ENCODE measurements at regions of chr7 and their contacts with region 1.

Region 1: GRCh38 chr7:28435732-28436378 is 23.5 kb downstream of the CREB5 start:
- DNase-seq: peak; percentile 46
- ATAC-seq: peak; percentile 94
- H3K4me3 ChIP-seq: no peak overlapping the region
- H3K27ac ChIP-seq: no peak overlapping the region
- H3K4me1 ChIP-seq: peaks cover 18% of the 10 kb centered on the region
- H3K27me3 ChIP-seq: peaks cover 33% of the 10 kb centered on the region
- CTCF ChIP-seq: no peak

Region 2: DNA sequence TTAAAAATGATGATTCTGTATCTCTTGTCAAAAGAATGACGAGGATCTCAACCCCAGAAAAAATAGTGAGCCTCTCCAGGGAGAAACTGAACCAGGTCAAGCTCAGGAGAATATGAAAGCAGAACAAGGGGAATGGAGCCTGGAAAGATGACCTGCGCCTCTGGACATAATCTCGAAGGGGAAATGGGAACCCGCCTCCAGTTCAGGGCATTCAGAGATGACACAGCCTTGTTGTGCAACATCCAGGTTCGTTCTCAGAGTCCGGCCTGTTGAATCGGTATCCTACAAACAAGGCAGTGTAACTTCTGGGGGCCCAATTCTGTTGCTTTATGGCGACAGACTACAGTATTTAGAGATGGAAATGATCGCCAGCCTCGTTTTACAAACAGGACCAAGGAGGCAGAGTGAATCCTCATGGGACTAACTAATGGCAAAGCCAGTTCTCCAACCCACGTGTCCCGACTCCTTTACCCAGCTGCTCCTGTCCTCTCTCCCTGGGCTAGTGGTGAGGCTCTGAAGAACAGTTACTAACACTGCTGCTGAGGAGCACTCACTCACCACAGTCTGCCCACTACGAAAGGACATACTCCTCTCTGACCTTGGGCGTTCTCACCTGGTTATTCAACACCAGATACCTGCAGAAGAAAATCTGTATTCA is 322.8 kb before region 1 on chr7:
- CTCF ChIA-PET with region 1: no interaction called
- POLR2A ChIA-PET with region 1: no interaction called
- intact Hi-C with region 1: no loop called
- DNase-seq: no peak
- ATAC-seq: no peak
- H3K4me3 ChIP-seq: no peak overlapping the region
- H3K27ac ChIP-seq: no peak overlapping the region
- H3K4me1 ChIP-seq: peaks cover 6% of the 10 kb centered on the region
- H3K27me3 ChIP-seq: no peaks in the 10 kb centered on the region
- CTCF ChIP-seq: no peak

Region 3: GRCh38 chr7:28132959-28133870 is 302.6 kb before region 1 on chr7:
- CTCF ChIA-PET with region 1: no interaction called
- POLR2A ChIA-PET with region 1: no interaction called
- intact Hi-C with region 1: no loop called
- DNase-seq: no peak
- ATAC-seq: peak; percentile 88
- H3K4me3 ChIP-seq: no peak overlapping the region
- H3K27ac ChIP-seq: no peak overlapping the region
- H3K4me1 ChIP-seq: 0 out of 2 replicates have a peak, but pooled peaks cover 6% of the 10 kb centered on the region
- H3K27me3 ChIP-seq: no peaks in the 10 kb centered on the region
- CTCF ChIP-seq: no peak

Region 4: GRCh38 chr7:28311670-28312069 is 124.2 kb before region 1 on chr7:
- CTCF ChIA-PET with region 1: no interaction called
- POLR2A ChIA-PET with region 1: no interaction called
- intact Hi-C with region 1: no loop called
- DNase-seq: no peak
- ATAC-seq: no peak
- H3K4me3 ChIP-seq: no peak overlapping the region
- H3K27ac ChIP-seq: no peak overlapping the region
- H3K4me1 ChIP-seq: peaks cover 25% of the 10 kb centered on the region
- H3K27me3 ChIP-seq: no peaks in the 10 kb centered on the region
- CTCF ChIP-seq: no peak

Region 5: GRCh38 chr7:28466341-28466740 is 30.5 kb after region 1 on chr7:
- CTCF ChIA-PET with region 1: no interaction called
- POLR2A ChIA-PET with region 1: no interaction called
- intact Hi-C with region 1: loop called (anchors 2 kb)
- DNase-seq: peak; percentile 76
- ATAC-seq: peak; percentile 93
- H3K4me3 ChIP-seq: 0 out of 2 replicates have a peak overlapping the region, but pooled peaks have one; percentile 5
- H3K27ac ChIP-seq: peak overlapping the region; percentile 38
- H3K4me1 ChIP-seq: peaks cover 14% of the 10 kb centered on the region
- H3K27me3 ChIP-seq: peaks cover 11% of the 10 kb centered on the region; the same call in 1 of the 2 replicates
- CTCF ChIP-seq: no peak

Region 6: GRCh38 chr7:28641752-28642545 is 206.1 kb after region 1 on chr7:
- CTCF ChIA-PET with region 1: no interaction called
- POLR2A ChIA-PET with region 1: no interaction called
- intact Hi-C with region 1: no loop called
- DNase-seq: no peak
- ATAC-seq: peak; percentile 23
- H3K4me3 ChIP-seq: no peak overlapping the region
- H3K27ac ChIP-seq: no peak overlapping the region
- H3K4me1 ChIP-seq: peaks cover 17% of the 10 kb centered on the region
- H3K27me3 ChIP-seq: no peaks in the 10 kb centered on the region
- CTCF ChIP-seq: no peak